ENCODE measurements at regions of chr10 and their contacts with region 1.

Region 1: DNA sequence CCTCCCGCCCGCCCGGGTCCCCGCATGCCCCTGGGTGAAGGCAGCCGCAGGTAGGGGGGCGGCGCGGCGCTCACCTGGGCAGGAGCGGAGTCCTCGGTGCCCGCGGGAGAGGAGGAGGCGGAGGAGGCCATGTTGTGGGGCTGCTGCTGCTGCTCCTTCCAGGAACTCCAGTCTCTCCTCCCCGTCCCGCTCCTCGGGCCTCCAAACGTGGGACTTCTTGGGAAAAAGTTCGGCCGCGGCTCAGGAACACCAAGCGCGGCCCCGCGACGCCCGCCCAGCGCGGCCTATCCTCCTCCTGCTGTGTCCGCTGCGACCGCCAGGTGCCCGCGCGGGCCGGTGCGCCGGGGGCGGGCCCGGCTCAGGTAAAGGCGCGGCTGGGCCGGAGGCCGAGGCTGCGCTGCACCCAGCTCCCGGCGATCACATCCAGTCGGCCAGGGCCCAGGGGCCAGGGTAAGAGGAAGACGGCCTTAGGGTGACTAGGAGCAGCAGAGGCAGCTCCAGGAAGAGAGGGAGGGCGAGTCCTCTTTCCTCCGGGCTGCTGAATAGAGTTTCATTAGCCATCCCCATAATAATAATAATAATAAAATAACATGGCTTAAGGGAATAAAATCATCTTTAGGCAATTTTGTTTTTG is 45.0 kb upstream of the CDK1 start:
- DNase-seq: peak; percentile 73
- H3K4me3 ChIP-seq: peak overlapping the region; percentile 47 to 82 (median 74)
- H3K27ac ChIP-seq: peak overlapping the region; percentile 43
- H3K4me1 ChIP-seq: peaks cover 15% of the 10 kb centered on the region
- H3K27me3 ChIP-seq: no peaks in the 10 kb centered on the region
- CTCF ChIP-seq: peak; percentile 32 to 54

Region 2: GRCh38 chr10:60718891-60719290 is 14.4 kb before region 1 on chr10:
- CTCF ChIA-PET with region 1: no interaction called
- dilution Hi-C with region 1: no loop called
- in situ Hi-C with region 1: no loop called
- intact Hi-C with region 1: no loop called
- DNase-seq: peak; percentile 9
- H3K4me3 ChIP-seq: no peak overlapping the region
- H3K27ac ChIP-seq: no peak overlapping the region
- H3K4me1 ChIP-seq: no peaks in the 10 kb centered on the region
- H3K27me3 ChIP-seq: no peaks in the 10 kb centered on the region
- CTCF ChIP-seq: no peak

Region 3: GRCh38 chr10:60757420-60757895 is 24.2 kb after region 1 on chr10:
- CTCF ChIA-PET with region 1: no interaction called
- dilution Hi-C with region 1: no loop called
- in situ Hi-C with region 1: no loop called
- intact Hi-C with region 1: loop called (anchors 2 kb)
- DNase-seq: no peak
- H3K4me3 ChIP-seq: no peak overlapping the region
- H3K27ac ChIP-seq: no peak overlapping the region
- H3K4me1 ChIP-seq: peaks cover 13% of the 10 kb centered on the region
- H3K27me3 ChIP-seq: no peaks in the 10 kb centered on the region
- CTCF ChIP-seq: no peak

Region 4: GRCh38 chr10:60778214-60779029 is 45.1 kb after region 1 on chr10 and contains the start of gene CDK1:
- CTCF ChIA-PET with region 1: no interaction called
- dilution Hi-C with region 1: no loop called
- in situ Hi-C with region 1: no loop called
- intact Hi-C with region 1: loop called (anchors 2 kb)
- DNase-seq: peak; percentile 99
- H3K4me3 ChIP-seq: peak within 1 kb of the TSS; percentile 79 to 95 (median 95)
- H3K27ac ChIP-seq: peak within 1 kb of the TSS; percentile 72
- H3K4me1 ChIP-seq: peaks cover 11% of the 10 kb centered on the region
- H3K27me3 ChIP-seq: no peaks in the 10 kb centered on the region
- CTCF ChIP-seq: no peak
- total RNA-seq, gene CDK1: 4.8 to 49.3 TPM

Measured in mammary epithelial cell (primary cell).